Heart right ventricle (tissue), 16 donors: ENCODE measurements at regions of chr10 and their contacts with region 1.

Region 1: DNA sequence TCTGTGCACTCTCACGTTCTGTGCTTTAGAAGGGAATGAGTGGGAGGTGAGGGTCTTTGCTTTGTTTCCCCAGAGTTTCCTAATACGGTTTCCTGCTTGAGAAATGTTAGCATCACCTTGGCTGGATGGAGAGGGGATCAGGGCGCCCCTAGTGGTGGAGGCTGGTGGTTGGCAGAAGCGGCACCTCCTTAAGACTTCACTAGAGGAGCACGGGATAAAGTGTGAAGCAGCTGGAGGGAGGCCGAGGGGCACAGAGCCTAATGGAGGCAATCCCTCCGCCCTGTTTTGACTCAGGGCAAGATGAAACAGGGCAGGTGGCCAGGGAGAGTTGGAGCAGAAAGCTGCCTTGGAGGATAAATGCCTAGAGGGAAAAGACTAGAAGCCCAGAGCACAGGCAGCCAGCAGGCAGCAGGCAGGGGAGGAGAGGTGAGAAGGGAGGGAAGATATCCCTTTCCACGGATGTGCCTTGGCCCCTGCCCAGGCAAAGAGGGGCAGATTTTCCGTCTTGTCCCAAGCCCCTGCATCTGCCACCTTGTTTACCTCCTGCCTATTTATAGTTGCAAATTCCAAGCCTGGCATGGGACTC is 56.0 kb upstream of the BTRC start:
- DNase-seq: peak; percentile 43 to 47
- ATAC-seq: peak in 6 of 8 donors; percentile 15 to 55 (median 39)
- H3K4me3 ChIP-seq: no peak overlapping the region
- H3K27ac ChIP-seq: no peak overlapping the region
- H3K4me1 ChIP-seq: peaks cover 0 to 16% (median 3%) of the 10 kb centered on the region in 9 donors
- H3K27me3 ChIP-seq: peaks cover 0 to 52% (median 31%) of the 10 kb centered on the region in 7 donors
- CTCF ChIP-seq: peak; percentile 61 to 87 (median 82)

Region 2: DNA sequence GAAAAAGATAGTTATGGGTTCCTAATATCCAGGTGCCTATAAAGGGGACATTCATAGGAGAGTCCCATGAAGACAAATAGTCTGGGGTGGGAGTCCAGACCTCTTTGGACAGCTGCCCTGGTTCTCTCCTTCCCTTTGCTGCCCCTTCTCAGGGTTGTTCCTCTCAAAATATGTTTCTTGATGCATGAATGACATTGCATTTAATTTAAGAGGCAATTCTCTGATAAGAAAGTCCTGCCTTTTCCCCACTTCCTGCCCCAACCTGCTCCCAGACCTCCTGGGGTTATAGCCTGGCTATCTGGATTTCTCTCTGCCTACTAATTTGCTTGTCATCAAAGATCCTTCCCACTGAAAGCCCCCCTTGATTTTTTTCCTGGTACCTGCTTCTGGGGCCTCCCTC is 43.4 kb after region 1 on chr10:
- intact Hi-C with region 1: no loop called
- DNase-seq: no peak
- ATAC-seq: no peak
- H3K4me3 ChIP-seq: no peak overlapping the region
- H3K27ac ChIP-seq: no peak overlapping the region
- H3K4me1 ChIP-seq: no peaks in the 10 kb centered on the region
- H3K27me3 ChIP-seq: peaks cover 0 to 4% (median 0%) of the 10 kb centered on the region in 7 donors
- CTCF ChIP-seq: no peak

Region 3: GRCh38 chr10:101446947-101447346 is 149.0 kb after region 1 on chr10:
- intact Hi-C with region 1: loop called in 8 of 10 experiments (anchors 2 to 10 kb)
- DNase-seq: peak; percentile 11 to 14
- ATAC-seq: peak; percentile 34 to 91 (median 82)
- H3K4me3 ChIP-seq: no peak overlapping the region
- H3K27ac ChIP-seq: peak overlapping the region in 6 of 10 donors; percentile 47 to 61 (median 59)
- H3K4me1 ChIP-seq: peaks cover 0 to 49% (median 29%) of the 10 kb centered on the region in 9 donors
- H3K27me3 ChIP-seq: no peaks in the 10 kb centered on the region
- CTCF ChIP-seq: no peak

Region 4: DNA sequence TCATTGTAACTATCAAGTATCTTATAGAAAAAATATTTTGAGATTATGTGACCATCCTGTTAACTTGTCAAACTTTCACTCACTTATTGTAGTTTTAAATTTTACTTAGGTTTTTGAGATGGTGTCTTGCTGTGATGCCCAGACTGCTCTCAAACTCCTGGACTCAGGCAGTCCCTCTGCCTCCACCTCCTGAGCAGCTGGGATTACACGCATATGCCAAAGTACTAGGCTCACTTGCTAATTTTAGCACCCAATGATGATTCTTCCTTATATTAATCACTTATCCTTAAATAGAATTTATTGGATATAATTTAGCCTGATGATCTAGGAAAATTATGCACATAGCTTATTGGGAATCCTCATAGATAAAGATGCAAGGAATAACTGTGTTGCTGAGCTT is 160.9 kb after region 1 on chr10:
- intact Hi-C with region 1: loop called in 1 of 10 experiments (anchors 5 kb)
- DNase-seq: no peak
- ATAC-seq: peak in 2 of 8 donors; percentile 56 to 70
- H3K4me3 ChIP-seq: no peak overlapping the region
- H3K27ac ChIP-seq: no peak overlapping the region
- H3K4me1 ChIP-seq: peaks cover 0 to 16% (median 2%) of the 10 kb centered on the region in 9 donors
- H3K27me3 ChIP-seq: no peaks in the 10 kb centered on the region
- CTCF ChIP-seq: no peak